ENCODE measurements at regions of chr15 and their contacts with region 1.

Region 1: DNA sequence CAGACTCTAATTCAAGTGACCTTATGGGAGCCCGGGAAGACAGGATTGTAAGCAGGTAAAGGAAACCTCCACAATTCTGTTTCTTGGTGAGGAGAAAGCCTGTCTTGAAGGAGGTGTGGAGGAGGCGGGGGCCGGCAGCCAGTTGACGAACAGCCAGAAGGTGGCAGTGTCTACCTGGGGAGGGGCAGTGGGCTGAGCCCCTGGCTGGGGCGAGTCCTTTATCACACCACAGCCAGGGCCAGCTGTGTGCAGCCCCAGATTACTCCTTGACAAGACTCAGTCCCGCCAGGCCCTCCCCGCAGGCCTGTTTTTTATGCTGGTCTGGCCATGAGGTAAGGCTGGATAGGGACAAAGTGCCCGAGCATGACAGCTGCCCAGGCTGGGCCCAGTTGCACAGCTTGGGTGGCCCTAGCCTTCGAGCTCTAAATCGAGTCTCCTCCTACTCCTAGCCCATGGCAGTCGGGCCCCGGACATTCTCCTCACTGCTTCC is 40.9 kb upstream of the IDH2 start:
- DNase-seq: peak; percentile 80

Region 2: DNA sequence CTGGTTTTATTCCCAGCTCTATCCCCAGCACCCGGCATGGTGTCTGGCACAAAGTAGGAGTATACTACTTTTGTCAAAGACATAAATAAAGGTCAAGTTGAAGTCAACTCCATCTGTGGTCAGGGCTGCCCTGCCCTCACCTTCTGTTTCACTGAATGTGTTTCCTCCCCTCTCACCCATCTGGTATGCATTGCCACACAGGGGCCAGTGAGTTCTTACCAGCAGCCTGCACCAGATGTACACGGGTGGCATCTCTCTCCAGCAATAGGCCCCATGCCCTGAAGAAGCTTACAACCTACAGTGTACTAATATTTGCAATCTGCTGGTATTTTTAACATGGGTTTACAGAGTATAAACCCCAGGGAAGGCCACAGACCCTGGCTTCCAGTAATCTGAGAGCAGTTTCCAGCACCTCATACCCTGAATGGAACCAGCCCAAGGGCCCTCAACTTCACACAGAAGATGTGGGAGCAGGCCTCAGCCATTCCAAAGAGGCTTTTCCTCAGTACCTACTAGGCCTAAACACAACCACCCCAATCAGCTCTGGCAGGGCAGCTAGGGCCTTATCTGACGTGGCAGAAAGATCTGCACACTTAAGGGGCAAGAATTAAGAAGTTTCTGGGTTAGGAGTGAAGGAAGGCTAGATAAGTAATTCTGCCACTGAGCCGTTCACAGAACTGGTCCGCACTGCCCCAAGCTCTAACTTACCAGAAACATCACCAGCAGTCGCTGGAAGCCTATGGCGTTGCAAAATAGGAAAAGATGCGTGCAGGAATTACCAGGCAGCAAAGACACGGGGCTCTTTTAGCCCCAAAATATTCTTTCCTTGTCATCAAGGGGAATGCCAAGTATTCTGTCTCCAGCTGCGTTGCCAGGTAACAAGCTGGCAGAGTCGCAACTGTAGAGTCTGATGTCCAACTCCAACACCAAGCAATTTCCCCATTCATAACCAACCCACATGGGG is 43.1 kb before region 1 on chr15:
- intact Hi-C with region 1: loop called (anchors 5 kb)
- DNase-seq: peak; percentile 43